Calu3 (cell line): ENCODE measurements at regions of chr17 and their contacts with region 1.

Region 1: DNA sequence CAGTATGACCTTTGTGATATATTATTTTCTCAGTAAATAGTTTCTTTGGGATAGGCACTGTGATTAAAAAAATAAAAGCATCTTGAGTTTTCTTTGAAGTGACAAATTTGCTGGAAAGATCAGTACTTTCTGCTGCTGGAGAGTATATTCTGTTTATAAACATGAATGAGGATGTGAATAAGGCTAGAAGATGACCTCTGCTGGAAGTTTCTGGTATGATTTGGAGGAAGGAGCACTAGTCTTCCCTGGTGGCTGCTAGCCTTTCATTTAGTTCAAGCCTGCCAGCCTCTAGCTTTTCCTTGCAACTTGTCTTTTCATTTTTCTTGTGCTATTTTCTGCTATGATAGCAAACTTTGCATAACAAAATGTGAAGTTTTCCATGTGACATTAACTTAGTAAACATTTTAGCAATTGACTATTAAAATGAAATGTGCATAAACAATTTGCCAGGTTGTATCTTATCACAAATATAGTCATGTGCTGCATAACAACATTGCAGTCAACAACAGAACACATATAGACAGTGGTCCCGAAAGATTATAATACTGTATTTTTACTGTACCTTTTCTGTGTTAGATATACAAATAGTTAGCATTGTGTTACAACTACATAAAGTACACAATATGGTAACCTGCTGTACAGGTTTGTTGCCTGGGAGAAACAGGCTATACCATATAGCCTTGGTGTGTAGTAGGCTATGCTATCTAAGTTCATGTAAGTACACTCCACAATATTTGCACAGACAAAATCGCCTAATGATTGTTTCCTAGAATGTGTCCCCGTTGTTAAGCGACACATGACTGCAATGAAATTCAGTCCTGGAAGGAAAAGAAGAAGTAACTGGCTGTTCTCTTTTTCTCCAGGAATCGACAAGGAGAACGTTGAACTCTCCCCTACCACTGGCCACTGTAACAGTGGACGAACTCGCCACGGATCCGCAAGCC is 18.1 kb upstream of the RAB11FIP4 start:
- DNase-seq: no peak
- H3K4me3 Mint-ChIP-seq: no peak overlapping the region
- H3K27ac Mint-ChIP-seq: no peak overlapping the region
- H3K4me1 Mint-ChIP-seq: peaks cover 13% of the 10 kb centered on the region
- H3K27me3 Mint-ChIP-seq: no peaks in the 10 kb centered on the region
- CTCF ChIP-seq: peak; percentile 13

Region 2: GRCh38 chr17:31269578-31269983 is 103.8 kb before region 1 on chr17:
- CTCF ChIA-PET with region 1: no interaction called
- intact Hi-C with region 1: loop called (anchors 5 kb)
- DNase-seq: peak; percentile 41
- H3K4me3 Mint-ChIP-seq: peak overlapping the region; percentile 33
- H3K27ac Mint-ChIP-seq: peak overlapping the region; percentile 20
- H3K4me1 Mint-ChIP-seq: peaks cover 24% of the 10 kb centered on the region
- H3K27me3 Mint-ChIP-seq: no peaks in the 10 kb centered on the region
- CTCF ChIP-seq: no peak

Region 3: GRCh38 chr17:31388770-31389661 is 15.6 kb after region 1 on chr17:
- CTCF ChIA-PET with region 1: no interaction called
- intact Hi-C with region 1: no loop called
- DNase-seq: peak; percentile 40
- H3K4me3 Mint-ChIP-seq: no peak overlapping the region
- H3K27ac Mint-ChIP-seq: no peak overlapping the region
- H3K4me1 Mint-ChIP-seq: no peaks in the 10 kb centered on the region
- H3K27me3 Mint-ChIP-seq: peaks cover 39% of the 10 kb centered on the region
- CTCF ChIP-seq: peak; percentile 75

Region 4: DNA sequence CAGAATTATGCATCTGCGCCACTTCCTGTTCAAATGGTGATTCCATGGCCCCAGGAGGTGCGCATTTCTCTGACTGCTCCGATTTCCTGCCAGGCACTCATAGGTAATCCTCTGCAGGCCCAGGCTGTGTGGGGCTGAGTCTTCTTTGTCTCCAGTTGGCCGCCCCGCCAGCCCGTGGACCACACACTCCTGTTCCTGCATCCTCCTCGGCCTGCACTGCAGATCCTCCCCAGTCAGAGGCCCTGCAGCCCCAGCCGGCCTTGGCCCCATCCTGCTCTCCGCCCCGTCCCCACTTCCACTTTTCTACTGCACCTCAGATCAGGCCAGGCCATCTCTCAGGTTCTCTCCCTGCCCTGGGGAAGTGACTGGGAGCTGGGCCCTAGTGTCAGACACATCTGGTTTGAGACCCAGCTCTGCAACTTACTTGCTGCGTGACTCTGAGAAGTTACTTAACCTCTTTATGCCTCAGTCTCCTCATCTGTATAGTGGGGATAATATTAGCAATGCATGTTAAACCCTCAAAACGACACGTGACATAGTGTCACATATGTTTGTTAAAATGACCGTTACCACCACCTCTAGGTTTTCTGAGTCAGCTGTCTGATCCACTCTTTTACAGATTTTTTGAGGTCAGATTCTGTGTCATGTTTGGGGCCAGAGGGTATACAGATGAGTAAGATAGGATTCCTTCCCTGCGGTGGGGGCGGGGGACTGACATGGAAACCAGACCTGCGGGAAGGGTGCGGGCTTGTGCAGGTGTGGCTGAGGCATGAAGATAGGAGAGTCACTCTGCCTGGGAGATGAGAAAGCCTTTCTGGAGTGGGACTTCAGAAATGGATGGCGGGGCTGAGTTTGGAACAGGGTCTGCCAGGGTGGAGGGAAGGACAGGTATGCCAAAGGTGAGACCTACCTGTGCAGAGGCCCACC is 30.9 kb after region 1 on chr17:
- CTCF ChIA-PET with region 1: no interaction called
- intact Hi-C with region 1: no loop called
- DNase-seq: no peak
- H3K4me3 Mint-ChIP-seq: no peak overlapping the region
- H3K27ac Mint-ChIP-seq: no peak overlapping the region
- H3K4me1 Mint-ChIP-seq: no peaks in the 10 kb centered on the region
- H3K27me3 Mint-ChIP-seq: peaks cover 69% of the 10 kb centered on the region
- CTCF ChIP-seq: no peak